Prostate gland (tissue), 2 donors: ENCODE measurements at regions of chr6 and their contacts with region 1.

Region 1: DNA sequence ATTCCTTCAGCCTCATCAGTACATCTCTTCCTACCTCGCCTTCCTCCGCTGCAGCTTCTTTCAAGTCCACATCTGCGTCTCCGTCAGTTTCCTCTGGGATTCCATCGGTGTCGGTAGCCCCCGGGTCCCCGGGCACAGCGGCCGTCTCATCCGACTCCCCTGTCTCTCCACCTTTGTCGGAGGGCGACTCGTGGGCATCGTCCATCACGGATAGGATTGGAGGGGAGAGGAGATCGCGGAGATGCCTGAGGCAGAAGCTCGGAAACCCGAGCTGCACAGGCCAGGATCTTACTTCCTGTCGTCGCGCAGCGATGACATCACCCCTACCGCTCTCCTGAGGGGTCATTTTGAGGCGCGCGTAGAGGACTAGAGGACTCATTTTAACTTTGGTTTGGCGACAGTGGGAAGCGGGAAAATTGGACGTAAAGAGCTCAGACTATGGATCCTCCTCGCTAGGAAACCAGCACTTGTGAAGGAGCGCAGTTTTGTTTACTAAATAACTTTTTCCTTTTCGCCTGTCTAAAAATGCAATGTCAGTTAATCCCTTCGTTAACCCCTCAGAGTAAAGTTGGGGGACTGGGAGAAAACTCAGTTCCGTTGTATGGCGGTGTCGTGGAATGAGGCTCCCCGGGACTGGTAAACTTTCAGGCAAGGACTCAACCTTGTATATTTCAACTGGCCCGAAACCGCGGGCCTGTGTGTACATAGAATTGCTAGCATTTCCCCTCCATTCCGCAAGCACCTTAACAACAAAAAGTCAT is at the start of gene TAF11:
- DNase-seq: peak; percentile 95
- H3K4me3 ChIP-seq: peak within 1 kb of the TSS; percentile 78 to 80
- H3K27ac ChIP-seq: peak within 1 kb of the TSS; percentile 91
- H3K4me1 ChIP-seq: peaks cover 19% of the 10 kb centered on the region
- H3K27me3 ChIP-seq: no peaks in the 10 kb centered on the region
- CTCF ChIP-seq: no peak
- POLR2A ChIP-seq: peak; percentile 54
- total RNA-seq, gene TAF11: 14.8 to 38.6 TPM

Region 2: GRCh38 chr6:34757687-34758274 is 130.2 kb before region 1 on chr6:
- intact Hi-C with region 1: loop called (anchors 5 kb)
- DNase-seq: no peak
- H3K4me3 ChIP-seq: peak overlapping the region; percentile 50 to 56
- H3K27ac ChIP-seq: peak overlapping the region; percentile 94 to 96
- H3K4me1 ChIP-seq: no peaks in the 10 kb centered on the region
- H3K27me3 ChIP-seq: no peaks in the 10 kb centered on the region
- CTCF ChIP-seq: no peak
- POLR2A ChIP-seq: no peak

Region 3: DNA sequence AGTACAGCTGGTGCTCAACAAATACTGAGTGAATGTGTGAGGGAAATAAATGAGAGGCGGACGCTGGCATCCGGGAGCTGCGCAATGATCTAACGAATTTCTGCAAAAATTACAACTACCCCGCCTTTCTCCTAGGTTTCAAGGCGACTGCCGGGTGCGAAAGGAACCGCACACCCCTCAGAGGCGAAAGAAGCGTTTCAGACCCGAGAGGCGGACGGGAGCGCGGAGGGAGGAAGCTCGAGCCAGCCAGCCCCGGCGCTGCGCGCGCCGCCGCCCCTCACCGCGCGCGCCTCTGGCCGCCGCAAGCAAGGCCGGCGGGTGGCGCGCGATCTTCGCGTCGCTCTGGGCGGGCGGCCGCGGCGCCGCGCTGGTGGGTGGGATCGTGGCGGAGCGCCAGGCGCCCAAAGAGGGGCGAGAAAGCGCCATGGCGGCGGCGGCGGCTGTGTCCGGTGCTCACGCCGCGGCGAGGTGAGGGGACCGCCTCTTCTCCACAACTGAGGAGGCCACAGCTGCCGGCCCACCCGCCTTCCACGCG is 96.2 kb before region 1 on chr6 and contains the start of gene BLTP3A:
- intact Hi-C with region 1: loop called (anchors 5 kb)
- DNase-seq: peak; percentile 55
- H3K4me3 ChIP-seq: peak within 1 kb of the TSS; percentile 79 to 87
- H3K27ac ChIP-seq: peak within 1 kb of the TSS; percentile 89 to 91
- H3K4me1 ChIP-seq: no peaks in the 10 kb centered on the region
- H3K27me3 ChIP-seq: no peaks in the 10 kb centered on the region
- CTCF ChIP-seq: peak in 3 of 4 experiments; percentile 1 to 39 (median 3)
- POLR2A ChIP-seq: peak; percentile 10
- total RNA-seq, gene BLTP3A: 12.7 to 24.3 TPM

Region 4: DNA sequence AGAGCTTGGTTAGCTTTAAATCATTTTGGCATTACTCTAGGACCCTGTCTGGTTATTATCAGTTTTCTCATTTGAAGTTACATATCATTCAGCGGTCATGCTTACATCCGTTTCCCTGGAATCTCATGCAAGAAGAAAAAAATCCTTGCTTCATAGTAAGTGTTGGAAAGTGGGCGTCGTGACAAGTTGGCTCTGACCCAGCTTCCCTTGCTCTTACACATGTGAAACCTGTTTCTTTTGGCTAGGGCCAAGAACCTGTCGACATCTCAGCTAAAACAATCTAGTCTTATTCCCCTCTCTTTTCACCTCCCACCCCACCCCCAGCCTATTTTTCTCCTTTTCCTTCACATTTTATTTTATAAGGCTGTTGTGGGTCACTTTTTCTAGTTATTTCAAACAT is 46.6 kb after region 1 on chr6:
- intact Hi-C with region 1: no loop called
- DNase-seq: peak; percentile 76
- H3K4me3 ChIP-seq: no peak overlapping the region
- H3K27ac ChIP-seq: no peak overlapping the region
- H3K4me1 ChIP-seq: no peaks in the 10 kb centered on the region
- H3K27me3 ChIP-seq: no peaks in the 10 kb centered on the region
- CTCF ChIP-seq: no peak
- POLR2A ChIP-seq: no peak

Region 5: GRCh38 chr6:35311390-35312075 is 423.6 kb after region 1 on chr6:
- intact Hi-C with region 1: no loop called
- DNase-seq: no peak
- H3K4me3 ChIP-seq: no peak overlapping the region
- H3K27ac ChIP-seq: no peak overlapping the region
- H3K4me1 ChIP-seq: no peaks in the 10 kb centered on the region
- H3K27me3 ChIP-seq: no peaks in the 10 kb centered on the region
- CTCF ChIP-seq: no peak
- POLR2A ChIP-seq: no peak